Activated CD4-positive, alpha-beta T cell treated with anti-CD3 and anti-CD28 coated beads for 36 hours (primary cell): ENCODE measurements at regions of chr2 and their contacts with region 1.

Region 1: DNA sequence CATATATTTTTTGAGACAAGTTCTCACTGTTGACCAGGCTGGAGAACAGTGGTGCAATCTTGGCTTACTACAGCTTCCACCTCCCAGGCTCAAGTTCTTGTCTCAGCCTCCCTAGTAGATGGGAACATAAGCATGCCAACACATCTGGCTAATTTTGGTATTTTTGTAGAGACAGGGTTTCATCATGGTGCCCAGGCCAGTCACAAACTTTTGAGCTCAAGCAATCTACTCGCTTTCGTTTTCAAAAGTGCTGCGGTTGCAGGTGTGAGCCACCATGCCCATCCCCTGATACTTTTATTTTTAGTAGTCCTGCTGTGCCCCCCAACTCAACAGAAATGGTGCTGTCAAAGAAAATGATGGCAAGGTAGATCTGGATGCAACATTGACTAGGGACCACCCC is 1127.3 kb downstream of the SUCLG1 start:
- DNase-seq: no peak
- ATAC-seq: no peak
- H3K4me3 Mint-ChIP-seq: no peak overlapping the region
- H3K27ac Mint-ChIP-seq: no peak overlapping the region
- H3K4me1 Mint-ChIP-seq: no peaks in the 10 kb centered on the region
- H3K27me3 Mint-ChIP-seq: no peaks in the 10 kb centered on the region

Region 2: GRCh38 chr2:82527124-82527523 is 804.7 kb before region 1 on chr2:
- CTCF ChIA-PET with region 1: no interaction called
- POLR2A ChIA-PET with region 1: no interaction called
- intact Hi-C with region 1: loop called in 1 of 2 experiments (anchors 10 kb)
- DNase-seq: no peak
- ATAC-seq: no peak
- H3K4me3 Mint-ChIP-seq: no peak overlapping the region
- H3K27ac Mint-ChIP-seq: no peak overlapping the region
- H3K4me1 Mint-ChIP-seq: no peaks in the 10 kb centered on the region
- H3K27me3 Mint-ChIP-seq: no peaks in the 10 kb centered on the region

Region 3: DNA sequence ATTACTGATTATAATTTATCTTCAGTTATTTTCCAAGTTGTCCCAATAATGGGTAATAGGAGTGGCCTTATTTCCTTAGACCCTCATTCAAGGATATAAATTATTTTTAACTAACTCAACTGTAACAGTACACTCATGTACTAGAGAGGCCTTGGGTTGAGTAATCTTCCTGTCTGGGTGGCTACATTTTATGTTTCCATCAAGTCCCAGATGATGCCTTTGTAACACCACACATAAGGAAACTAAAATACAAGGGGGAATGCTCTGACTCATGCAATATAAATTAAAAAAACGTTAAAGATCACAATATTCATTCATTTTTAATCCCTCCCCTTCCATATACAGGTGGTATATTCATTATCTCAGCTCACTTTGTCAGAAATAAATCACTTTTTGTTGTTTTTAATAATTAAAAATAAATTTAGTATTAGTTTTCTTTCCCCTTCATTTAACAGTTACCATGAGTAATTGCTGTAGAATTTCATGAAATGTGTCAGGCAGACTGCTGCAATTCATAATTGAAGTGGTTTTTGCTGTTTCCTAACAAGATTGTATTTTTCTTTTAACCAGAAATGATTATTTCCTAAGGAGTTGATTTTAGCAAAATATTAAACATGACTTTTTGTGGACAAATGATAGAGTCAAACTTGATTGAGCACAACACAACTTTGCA is 276.3 kb before region 1 on chr2:
- CTCF ChIA-PET with region 1: no interaction called
- POLR2A ChIA-PET with region 1: no interaction called
- intact Hi-C with region 1: no loop called
- DNase-seq: no peak
- ATAC-seq: no peak
- H3K4me3 Mint-ChIP-seq: no peak overlapping the region
- H3K27ac Mint-ChIP-seq: no peak overlapping the region
- H3K4me1 Mint-ChIP-seq: no peaks in the 10 kb centered on the region
- H3K27me3 Mint-ChIP-seq: no peaks in the 10 kb centered on the region

Region 4: DNA sequence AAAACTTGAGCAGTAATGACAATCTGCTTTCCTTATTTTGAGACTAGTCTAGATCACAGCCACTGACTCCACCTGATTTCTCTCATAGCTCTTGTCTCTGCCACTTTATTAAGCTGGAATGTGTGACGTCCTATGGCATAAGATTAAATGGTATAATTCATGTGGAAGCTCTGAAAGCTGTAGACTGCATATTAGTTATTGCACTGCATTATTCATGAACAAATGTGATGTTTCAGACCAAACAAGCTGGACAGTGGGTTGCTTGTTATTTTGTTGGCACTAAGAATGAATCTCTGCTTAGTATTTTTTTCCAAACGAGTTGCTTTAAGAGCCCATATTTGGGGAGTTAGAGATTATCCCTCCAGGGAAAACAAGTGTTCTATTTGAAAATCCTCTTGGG is 91.2 kb before region 1 on chr2:
- CTCF ChIA-PET with region 1: no interaction called
- POLR2A ChIA-PET with region 1: no interaction called
- intact Hi-C with region 1: no loop called
- DNase-seq: no peak
- ATAC-seq: no peak
- H3K4me3 Mint-ChIP-seq: no peak overlapping the region
- H3K27ac Mint-ChIP-seq: no peak overlapping the region
- H3K4me1 Mint-ChIP-seq: no peaks in the 10 kb centered on the region
- H3K27me3 Mint-ChIP-seq: no peaks in the 10 kb centered on the region

Region 5: DNA sequence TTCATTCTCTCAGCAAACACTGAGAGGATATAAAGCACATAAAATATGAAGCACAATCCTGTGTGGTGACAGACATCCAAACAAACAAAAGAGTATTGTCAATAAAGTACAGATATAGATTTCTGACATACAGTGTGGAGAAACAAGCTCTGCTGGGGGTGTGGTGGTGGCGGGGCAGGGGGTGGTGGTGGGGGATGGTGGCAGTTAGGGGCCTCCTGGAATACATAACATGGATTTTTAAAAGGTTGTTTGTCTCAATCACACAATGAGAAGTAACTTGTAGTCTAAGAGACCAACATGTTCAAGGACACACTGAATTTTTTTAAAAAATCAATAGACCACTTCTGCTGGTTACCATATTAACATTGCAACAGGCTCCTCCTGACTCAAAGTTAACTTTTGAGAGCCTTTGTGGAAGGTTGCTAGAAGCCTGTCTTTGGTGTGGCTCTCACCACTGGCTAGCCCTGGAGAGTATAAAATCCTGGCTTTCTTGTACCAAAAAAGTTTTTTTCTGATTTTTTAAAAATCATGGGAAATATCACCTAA is 70.1 kb before region 1 on chr2:
- CTCF ChIA-PET with region 1: no interaction called
- POLR2A ChIA-PET with region 1: no interaction called
- intact Hi-C with region 1: no loop called
- DNase-seq: no peak
- ATAC-seq: no peak
- H3K4me3 Mint-ChIP-seq: no peak overlapping the region
- H3K27ac Mint-ChIP-seq: no peak overlapping the region
- H3K4me1 Mint-ChIP-seq: no peaks in the 10 kb centered on the region
- H3K27me3 Mint-ChIP-seq: no peaks in the 10 kb centered on the region

Region 6: GRCh38 chr2:83273322-83273721 is 58.5 kb before region 1 on chr2:
- CTCF ChIA-PET with region 1: no interaction called
- POLR2A ChIA-PET with region 1: no interaction called
- intact Hi-C with region 1: no loop called
- DNase-seq: no peak
- ATAC-seq: no peak
- H3K4me3 Mint-ChIP-seq: no peak overlapping the region
- H3K27ac Mint-ChIP-seq: no peak overlapping the region
- H3K4me1 Mint-ChIP-seq: no peaks in the 10 kb centered on the region
- H3K27me3 Mint-ChIP-seq: no peaks in the 10 kb centered on the region